ENCODE measurements at regions of chr14 and their contacts with region 1.

Region 1: DNA sequence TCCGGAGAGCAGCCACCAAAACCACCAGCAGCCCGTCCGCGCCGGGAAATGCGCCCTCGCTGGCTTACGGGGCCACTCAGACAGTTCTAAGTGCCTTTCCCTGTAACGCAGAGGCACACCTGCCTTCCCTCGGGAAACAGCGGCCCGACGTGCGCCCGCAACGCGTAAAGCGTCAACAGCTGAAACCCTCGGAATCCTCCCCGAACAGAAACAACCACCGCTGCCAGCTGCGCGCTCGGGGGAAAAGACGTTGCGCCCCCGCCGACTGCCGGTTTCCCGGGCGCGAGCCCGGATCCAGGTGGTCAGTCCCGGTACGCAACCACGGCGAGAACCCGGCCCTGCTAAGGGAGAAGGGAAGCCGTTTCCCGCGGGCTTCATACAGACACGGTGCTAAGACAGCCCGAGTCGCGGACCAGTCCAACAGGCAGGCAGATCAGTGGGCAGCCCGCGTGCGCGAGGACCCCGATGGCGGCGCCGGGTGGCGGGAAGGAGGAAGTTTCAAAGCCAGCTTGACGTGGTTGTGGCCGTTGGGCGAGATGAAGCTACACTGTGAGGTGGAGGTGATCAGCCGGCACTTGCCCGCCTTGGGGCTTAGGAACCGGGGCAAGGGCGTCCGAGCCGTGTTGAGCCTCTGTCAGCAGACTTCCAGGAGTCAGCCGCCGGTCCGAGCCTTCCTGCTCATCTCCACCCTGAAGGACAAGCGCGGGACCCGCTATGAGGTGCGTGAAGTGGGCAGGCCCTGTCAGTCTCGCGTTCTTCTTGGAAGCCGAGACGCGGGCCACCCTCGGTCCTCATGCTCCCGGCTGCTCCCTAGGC is at the start of gene LRR1:
- DNase-seq: peak; percentile 90
- H3K4me3 Mint-ChIP-seq: peak within 1 kb of the TSS; percentile 96
- H3K27ac Mint-ChIP-seq: peak within 1 kb of the TSS; percentile 97
- H3K4me1 Mint-ChIP-seq: peaks cover 18% of the 10 kb centered on the region
- H3K27me3 Mint-ChIP-seq: no peaks in the 10 kb centered on the region
- total RNA-seq, gene LRR1: 51.8 to 52.0 TPM

Region 2: GRCh38 chr14:49405291-49405690 is 193.4 kb before region 1 on chr14:
- CTCF ChIA-PET with region 1: no interaction called
- POLR2A ChIA-PET with region 1: no interaction called
- intact Hi-C with region 1: no loop called
- DNase-seq: no peak
- H3K4me3 Mint-ChIP-seq: no peak overlapping the region
- H3K27ac Mint-ChIP-seq: no peak overlapping the region
- H3K4me1 Mint-ChIP-seq: peaks cover 13% of the 10 kb centered on the region
- H3K27me3 Mint-ChIP-seq: peaks cover 12% of the 10 kb centered on the region

Region 3: GRCh38 chr14:49620182-49621113 is 21.8 kb after region 1 on chr14 and contains the starts of genes MGAT2 and RPL36AL:
- CTCF ChIA-PET with region 1: interaction called, 10 read pairs
- POLR2A ChIA-PET with region 1: interaction called, 36 read pairs
- intact Hi-C with region 1: loop called (anchors 1 kb)
- DNase-seq: peak; percentile 98
- H3K4me3 Mint-ChIP-seq: peak within 1 kb of the TSS; percentile 96
- H3K27ac Mint-ChIP-seq: peak within 1 kb of the TSS; percentile 96
- H3K4me1 Mint-ChIP-seq: peaks cover 39% of the 10 kb centered on the region
- H3K27me3 Mint-ChIP-seq: no peaks in the 10 kb centered on the region
- total RNA-seq, gene MGAT2: 40.4 to 43.7 TPM
- total RNA-seq, gene RPL36AL: 314 to 320 TPM